ENCODE measurements at regions of chr12 and their contacts with region 1.

Region 1: DNA sequence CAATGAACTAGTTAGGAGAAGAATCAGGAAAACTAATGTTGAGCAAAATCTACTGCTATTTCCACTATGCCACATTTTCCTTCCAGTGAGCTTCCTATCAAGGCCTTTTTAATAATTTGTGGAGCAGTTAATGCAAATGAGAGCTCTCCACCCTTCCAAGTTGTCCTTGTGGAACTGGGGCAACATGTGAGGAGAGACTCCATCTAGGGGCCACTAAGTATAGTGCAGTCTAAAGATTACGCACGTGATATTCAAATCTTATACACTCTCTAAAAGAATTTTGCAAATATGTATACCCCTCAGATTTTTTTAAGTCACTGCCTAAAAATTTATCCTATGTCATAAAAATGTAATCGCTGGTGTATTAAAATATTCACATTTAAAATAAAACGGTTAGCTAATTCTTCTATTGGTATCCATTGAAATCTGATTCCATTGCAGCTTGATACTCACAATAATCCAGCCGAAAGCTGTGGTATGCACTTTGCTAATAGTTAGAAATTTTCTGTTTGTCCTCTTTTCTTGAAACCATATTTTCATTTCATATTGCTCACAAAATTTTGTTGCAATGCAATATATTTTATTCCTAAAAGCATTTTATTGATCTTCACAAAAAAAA is 100.1 kb downstream of the PAH start:
- DNase-seq: peak; percentile 13
- H3K4me3 ChIP-seq: no peak overlapping the region
- H3K27ac ChIP-seq: no peak overlapping the region
- H3K4me1 ChIP-seq: no peaks in the 10 kb centered on the region
- H3K27me3 ChIP-seq: no peaks in the 10 kb centered on the region
- CTCF ChIP-seq: peak; percentile 70 to 74

Region 2: DNA sequence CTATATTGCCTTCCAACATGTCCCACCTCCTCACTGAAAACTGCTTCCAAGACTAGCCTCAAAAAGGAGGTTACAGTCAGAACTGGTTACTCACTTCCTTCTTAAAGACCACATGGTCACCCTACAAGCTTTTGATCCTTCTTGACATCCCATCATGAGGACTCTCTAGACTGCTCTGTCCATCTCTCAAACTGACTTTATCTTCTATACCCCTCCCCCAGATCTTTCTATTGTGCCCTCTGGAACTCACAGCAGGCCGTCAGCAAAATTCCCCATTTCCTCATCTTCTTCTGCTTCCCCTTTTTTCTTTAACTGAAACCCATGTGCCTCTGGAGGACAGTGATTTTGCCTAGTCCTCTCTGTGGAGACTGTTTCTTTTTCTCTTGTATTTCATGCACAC is 318.5 kb before region 1 on chr12:
- CTCF ChIA-PET with region 1: interaction called, 10 read pairs
- dilution Hi-C with region 1: no loop called
- in situ Hi-C with region 1: no loop called
- intact Hi-C with region 1: no loop called
- DNase-seq: no peak
- H3K4me3 ChIP-seq: no peak overlapping the region
- H3K27ac ChIP-seq: no peak overlapping the region
- H3K4me1 ChIP-seq: no peaks in the 10 kb centered on the region
- H3K27me3 ChIP-seq: peaks cover 3% of the 10 kb centered on the region
- CTCF ChIP-seq: no peak